CD8-positive, alpha-beta T cell (primary cell): ENCODE measurements at regions of chr15 and their contacts with region 1.

Region 1: DNA sequence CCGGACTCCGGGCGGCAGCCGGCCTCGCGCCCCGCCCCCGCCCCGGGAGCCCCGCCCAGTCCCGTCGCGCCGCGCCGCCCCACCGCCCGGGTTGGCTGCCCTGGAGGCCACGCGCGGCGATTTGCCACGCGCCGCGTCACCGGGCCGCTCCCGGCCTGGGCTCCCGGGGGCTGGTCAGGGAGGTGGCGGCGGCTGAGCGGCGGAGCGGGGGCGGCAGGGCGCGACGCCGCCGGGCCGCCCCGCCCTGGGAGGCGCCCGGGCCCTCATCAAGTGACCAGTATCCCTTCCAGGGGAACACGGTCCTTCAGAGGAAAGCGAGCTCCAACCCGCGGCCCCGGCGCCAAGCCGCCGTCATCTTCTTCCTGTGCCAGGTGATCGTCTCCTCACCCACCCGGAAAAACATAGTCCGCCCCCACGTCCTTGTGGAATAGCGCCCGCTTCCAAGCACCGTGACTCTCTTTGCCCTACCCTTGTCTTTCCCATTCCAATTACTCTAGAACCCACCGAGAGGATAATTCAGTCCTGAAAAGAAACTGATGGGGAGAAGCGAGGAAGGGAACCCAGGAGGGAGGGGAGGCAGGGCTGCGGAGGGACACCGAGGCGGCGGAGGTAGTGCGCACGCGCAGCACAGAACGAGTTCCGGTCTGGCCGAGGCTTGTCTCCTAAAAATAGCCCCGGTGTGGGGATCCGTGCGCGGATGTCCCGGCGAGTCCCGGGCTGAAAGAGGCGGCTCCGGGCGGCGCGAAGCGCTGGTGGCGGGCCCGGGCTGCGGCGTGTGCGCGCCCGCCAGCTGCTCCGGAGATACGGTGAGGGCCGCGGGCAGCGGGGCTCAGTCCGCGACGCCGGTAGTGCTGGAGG is at the start of gene MEF2A:
- DNase-seq: peak; percentile 81 to 96 (median 91)
- ATAC-seq: peak; percentile 66
- H3K4me3 ChIP-seq: peak within 1 kb of the TSS; percentile 74 to 91
- H3K4me3 Mint-ChIP-seq: peak within 1 kb of the TSS; percentile 96
- H3K27ac ChIP-seq: peak within 1 kb of the TSS; percentile 64 to 90
- H3K27ac Mint-ChIP-seq: peak within 1 kb of the TSS; percentile 96
- H3K4me1 ChIP-seq: peaks cover 40% of the 10 kb centered on the region
- H3K4me1 Mint-ChIP-seq: peaks cover 55% of the 10 kb centered on the region
- H3K27me3 ChIP-seq: no peaks in the 10 kb centered on the region
- H3K27me3 Mint-ChIP-seq: no peaks in the 10 kb centered on the region
- CTCF ChIP-seq: no peak
- total RNA-seq, gene MEF2A: 20.3 to 24.9 TPM

Region 2: GRCh38 chr15:98865397-98866339 is 699.9 kb before region 1 on chr15:
- CTCF ChIA-PET with region 1: no interaction called
- POLR2A ChIA-PET with region 1: no interaction called
- intact Hi-C with region 1: loop called in 1 of 2 experiments (anchors 10 kb)
- DNase-seq: peak; percentile 34 to 91 (median 69)
- ATAC-seq: peak; percentile 91
- H3K4me3 ChIP-seq: peak overlapping the region; percentile 51 to 58
- H3K4me3 Mint-ChIP-seq: peak overlapping the region; percentile 84
- H3K27ac ChIP-seq: peak overlapping the region; percentile 70 to 76
- H3K27ac Mint-ChIP-seq: peak overlapping the region; percentile 90
- H3K4me1 ChIP-seq: peaks cover 20% of the 10 kb centered on the region
- H3K4me1 Mint-ChIP-seq: peaks cover 35% of the 10 kb centered on the region
- H3K27me3 ChIP-seq: no peaks in the 10 kb centered on the region
- H3K27me3 Mint-ChIP-seq: no peaks in the 10 kb centered on the region
- CTCF ChIP-seq: no peak

Region 3: DNA sequence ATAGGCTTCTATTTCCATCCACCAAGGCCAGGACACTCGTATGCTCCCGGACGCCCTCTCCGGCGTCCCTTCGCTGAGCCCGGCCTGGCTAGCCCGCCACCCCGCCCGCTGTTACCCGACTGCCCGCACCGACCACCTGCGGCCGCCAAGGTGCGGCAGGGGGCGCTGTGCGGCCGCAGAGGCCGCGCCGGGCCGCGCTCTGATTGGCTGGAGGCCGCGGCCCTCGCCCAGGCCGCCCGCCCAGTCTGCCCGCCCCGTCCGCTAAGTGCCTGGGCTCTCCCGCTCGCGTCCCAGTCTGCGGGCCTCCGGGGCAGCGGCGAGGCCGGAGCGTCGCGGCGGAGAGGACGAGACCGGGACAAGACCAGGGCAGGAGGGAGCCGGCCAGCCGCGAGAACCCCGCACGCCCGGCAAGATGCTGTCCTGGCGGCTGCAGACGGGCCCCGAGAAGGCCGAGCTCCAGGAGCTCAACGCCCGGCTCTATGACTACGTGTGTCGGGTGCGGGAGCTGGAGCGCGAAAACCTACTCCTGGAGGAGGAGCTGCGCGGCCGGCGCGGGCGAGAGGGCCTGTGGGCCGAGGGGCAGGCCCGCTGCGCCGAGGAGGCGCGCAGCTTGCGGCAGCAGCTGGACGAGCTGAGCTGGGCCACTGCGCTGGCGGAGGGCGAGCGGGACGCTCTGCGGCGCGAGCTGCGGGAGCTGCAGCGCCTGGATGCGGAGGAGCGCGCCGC is 460.6 kb before region 1 on chr15 and contains the start of gene SYNM:
- CTCF ChIA-PET with region 1: no interaction called
- POLR2A ChIA-PET with region 1: no interaction called
- intact Hi-C with region 1: no loop called
- DNase-seq: peak in 2 of 9 experiments; percentile 49 to 60
- ATAC-seq: peak; percentile 15
- H3K4me3 ChIP-seq: peak within 1 kb of the TSS in 1 of 2 experiments; percentile 34
- H3K4me3 Mint-ChIP-seq: peak within 1 kb of the TSS; percentile 61
- H3K27ac ChIP-seq: peak within 1 kb of the TSS in 1 of 2 experiments; percentile 43
- H3K27ac Mint-ChIP-seq: peak within 1 kb of the TSS; percentile 45
- H3K4me1 ChIP-seq: no peaks in the 10 kb centered on the region
- H3K4me1 Mint-ChIP-seq: peaks cover 19% of the 10 kb centered on the region
- H3K27me3 ChIP-seq: peaks cover 0 to 5% of the 10 kb centered on the region in 2 experiments
- H3K27me3 Mint-ChIP-seq: peaks cover 33% of the 10 kb centered on the region
- CTCF ChIP-seq: no peak
- total RNA-seq, gene SYNM: 3.3 to 3.9 TPM

Region 4: GRCh38 chr15:99250494-99251435 is 314.8 kb before region 1 on chr15:
- CTCF ChIA-PET with region 1: no interaction called
- POLR2A ChIA-PET with region 1: interaction called, 3 read pairs
- intact Hi-C with region 1: loop called (anchors 1 to 5 kb)
- DNase-seq: peak; percentile 83 to 98 (median 92)
- ATAC-seq: peak; percentile 95
- H3K4me3 ChIP-seq: peak overlapping the region; percentile 55 to 59
- H3K4me3 Mint-ChIP-seq: peak overlapping the region; percentile 90
- H3K27ac ChIP-seq: peak overlapping the region; percentile 25 to 79
- H3K27ac Mint-ChIP-seq: peak overlapping the region; percentile 89
- H3K4me1 ChIP-seq: peaks cover 19% of the 10 kb centered on the region
- H3K4me1 Mint-ChIP-seq: peaks cover 29% of the 10 kb centered on the region
- H3K27me3 ChIP-seq: no peaks in the 10 kb centered on the region
- H3K27me3 Mint-ChIP-seq: no peaks in the 10 kb centered on the region
- CTCF ChIP-seq: no peak

Region 5: DNA sequence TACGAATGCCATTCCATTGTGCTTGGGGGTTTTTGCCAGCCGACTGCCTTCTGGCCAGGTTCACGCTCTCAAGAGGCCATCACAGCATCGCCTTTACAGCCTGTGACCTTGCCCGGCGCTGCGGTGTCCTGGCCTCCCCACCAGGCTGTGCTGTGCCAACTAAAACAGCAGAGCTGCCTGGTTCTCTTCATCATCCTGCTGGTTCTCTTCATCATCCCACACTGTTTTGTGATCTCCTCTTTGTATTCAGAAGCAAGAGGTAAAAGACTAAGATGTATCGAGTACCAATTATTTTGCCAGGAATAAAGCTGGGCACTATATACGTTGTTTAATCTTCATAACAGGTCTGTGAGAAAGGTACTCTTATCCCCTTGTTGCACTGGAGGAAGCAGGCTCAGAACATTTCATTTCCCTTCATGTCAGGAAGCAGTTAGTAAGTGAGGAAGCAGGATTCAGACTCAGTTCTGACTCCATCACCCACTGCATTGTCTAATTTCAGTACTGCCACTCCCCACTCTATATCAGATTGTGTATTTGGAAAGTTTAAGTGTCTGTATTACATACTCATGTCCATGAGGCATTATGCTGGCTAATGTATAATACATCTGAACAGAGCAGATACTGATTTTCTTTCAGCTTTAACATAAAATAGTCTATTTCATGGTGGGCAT is 221.5 kb before region 1 on chr15:
- CTCF ChIA-PET with region 1: interaction called, 5 read pairs
- POLR2A ChIA-PET with region 1: no interaction called
- intact Hi-C with region 1: loop called in 1 of 2 experiments (anchors 5 kb)
- DNase-seq: peak; percentile 12 to 76 (median 53)
- ATAC-seq: peak; percentile 79
- H3K4me3 ChIP-seq: no peak overlapping the region
- H3K4me3 Mint-ChIP-seq: no peak overlapping the region
- H3K27ac ChIP-seq: no peak overlapping the region
- H3K27ac Mint-ChIP-seq: no peak overlapping the region
- H3K4me1 ChIP-seq: no peaks in the 10 kb centered on the region
- H3K4me1 Mint-ChIP-seq: peaks cover 5% of the 10 kb centered on the region
- H3K27me3 ChIP-seq: no peaks in the 10 kb centered on the region
- H3K27me3 Mint-ChIP-seq: no peaks in the 10 kb centered on the region
- CTCF ChIP-seq: peak; percentile 62

Region 6: DNA sequence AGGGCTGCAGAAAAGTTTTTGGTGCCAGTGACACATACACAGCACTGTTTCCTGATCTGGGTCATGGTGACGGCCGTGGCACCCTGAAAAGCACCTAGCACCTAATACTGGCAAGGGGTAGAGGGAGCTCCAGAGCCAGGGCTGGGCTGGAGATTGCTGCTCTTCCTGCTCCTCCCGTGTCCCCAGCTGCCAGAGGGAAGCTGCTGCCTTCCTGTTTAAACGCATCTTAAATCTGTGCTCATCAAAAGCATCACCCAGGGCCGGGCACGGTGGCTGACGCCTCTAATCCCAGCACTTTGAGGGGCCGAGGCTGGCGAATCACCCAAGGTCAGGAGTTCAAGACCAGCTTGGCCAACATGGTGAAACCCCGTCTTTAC is 156.4 kb before region 1 on chr15:
- CTCF ChIA-PET with region 1: interaction called, 10 read pairs
- POLR2A ChIA-PET with region 1: interaction called, 7 read pairs
- intact Hi-C with region 1: loop called in 1 of 2 experiments (anchors 1 kb)
- DNase-seq: peak in 5 of 9 experiments; percentile 22 to 65 (median 50)
- ATAC-seq: peak; percentile 77
- H3K4me3 ChIP-seq: no peak overlapping the region
- H3K4me3 Mint-ChIP-seq: no peak overlapping the region
- H3K27ac ChIP-seq: no peak overlapping the region
- H3K27ac Mint-ChIP-seq: no peak overlapping the region
- H3K4me1 ChIP-seq: peaks cover 20% of the 10 kb centered on the region
- H3K4me1 Mint-ChIP-seq: peaks cover 24% of the 10 kb centered on the region
- H3K27me3 ChIP-seq: no peaks in the 10 kb centered on the region
- H3K27me3 Mint-ChIP-seq: no peaks in the 10 kb centered on the region
- CTCF ChIP-seq: peak; percentile 25

Region 7: DNA sequence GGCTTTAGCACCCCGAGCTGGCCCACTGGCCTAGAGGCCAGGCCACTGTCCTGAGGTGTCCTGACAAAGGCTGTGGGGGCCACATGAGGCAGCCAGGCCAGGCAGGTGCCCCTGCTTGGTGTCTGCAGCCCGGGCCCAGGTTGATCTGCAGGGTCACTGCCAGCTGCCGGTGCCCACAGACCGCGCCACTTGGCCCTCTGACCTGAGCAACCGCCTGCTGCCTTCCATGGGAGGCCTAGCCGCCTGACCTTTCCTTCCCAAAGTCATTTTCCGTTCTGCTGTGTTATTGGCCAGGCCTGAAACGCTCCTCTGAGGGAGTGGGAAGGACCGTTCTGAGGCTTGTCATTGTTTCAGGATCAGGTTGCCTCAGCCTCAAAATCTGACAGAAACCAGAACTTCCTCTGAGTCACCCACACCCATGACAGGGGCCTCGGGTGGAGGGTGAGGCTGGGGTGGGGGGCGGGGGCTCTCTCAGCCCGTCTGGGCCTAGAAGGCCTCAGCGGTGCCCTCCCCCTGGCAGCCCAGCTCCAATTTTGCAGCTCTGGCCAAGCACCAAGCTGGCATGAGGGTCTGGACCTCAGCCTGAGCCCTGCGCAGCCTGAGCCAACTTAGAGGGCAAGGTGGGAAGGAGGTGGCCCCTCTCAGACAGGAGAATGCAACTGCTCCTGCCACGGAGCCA is 140.4 kb before region 1 on chr15:
- CTCF ChIA-PET with region 1: no interaction called
- POLR2A ChIA-PET with region 1: interaction called, 3 read pairs
- intact Hi-C with region 1: loop called (anchors 1 to 5 kb)
- DNase-seq: peak in 8 of 9 experiments; percentile 29 to 74 (median 53)
- ATAC-seq: peak; percentile 86
- H3K4me3 ChIP-seq: no peak overlapping the region
- H3K4me3 Mint-ChIP-seq: peak overlapping the region; percentile 74
- H3K27ac ChIP-seq: peak overlapping the region; percentile 26 to 54
- H3K27ac Mint-ChIP-seq: peak overlapping the region; percentile 98
- H3K4me1 ChIP-seq: peaks cover 63% of the 10 kb centered on the region
- H3K4me1 Mint-ChIP-seq: peaks cover 68% of the 10 kb centered on the region
- H3K27me3 ChIP-seq: no peaks in the 10 kb centered on the region
- H3K27me3 Mint-ChIP-seq: no peaks in the 10 kb centered on the region
- CTCF ChIP-seq: no peak

Region 8: GRCh38 chr15:99486371-99487336 is 78.9 kb before region 1 on chr15:
- CTCF ChIA-PET with region 1: no interaction called
- POLR2A ChIA-PET with region 1: no interaction called
- intact Hi-C with region 1: loop called in 1 of 2 experiments (anchors 5 kb)
- DNase-seq: peak in 3 of 9 experiments; percentile 15 to 34 (median 17)
- ATAC-seq: peak; percentile 42
- H3K4me3 ChIP-seq: peak overlapping the region; percentile 18 to 37
- H3K4me3 Mint-ChIP-seq: peak overlapping the region; percentile 82
- H3K27ac ChIP-seq: no peak overlapping the region
- H3K27ac Mint-ChIP-seq: peak overlapping the region; percentile 38
- H3K4me1 ChIP-seq: peaks cover 23% of the 10 kb centered on the region
- H3K4me1 Mint-ChIP-seq: peaks cover 23% of the 10 kb centered on the region
- H3K27me3 ChIP-seq: no peaks in the 10 kb centered on the region
- H3K27me3 Mint-ChIP-seq: no peaks in the 10 kb centered on the region
- CTCF ChIP-seq: no peak